ENCODE measurements at regions of chr18 and their contacts with region 1.

Region 1: DNA sequence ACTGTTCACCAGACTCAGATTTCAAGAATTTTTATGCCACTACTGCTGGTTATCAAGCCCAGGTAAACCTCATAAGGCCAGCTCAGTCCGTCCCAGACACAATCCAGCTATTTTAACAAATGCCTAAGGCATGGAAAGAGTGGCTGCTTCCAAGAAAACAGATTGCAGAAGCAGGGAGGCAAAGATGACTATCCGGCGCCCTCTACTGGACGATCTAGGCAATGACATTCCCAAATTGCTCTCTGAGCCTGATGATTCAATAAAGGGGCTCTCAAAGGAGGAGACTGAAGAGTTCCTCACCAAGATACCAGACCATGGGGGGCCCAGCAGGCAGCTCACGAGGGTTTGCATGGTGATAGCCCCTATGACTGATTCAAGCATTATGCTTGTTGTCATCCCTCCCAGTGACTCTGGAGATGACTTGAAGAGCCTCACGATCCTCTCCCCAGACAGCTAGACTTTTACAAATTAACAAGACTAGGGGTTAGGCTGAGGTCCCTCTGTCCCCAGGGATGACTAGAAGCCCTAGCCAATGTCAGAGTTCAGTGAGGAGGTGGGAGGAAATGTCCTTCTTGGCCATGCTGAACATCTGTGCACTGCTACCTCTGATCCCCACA is 25.0 kb downstream of the SERPINB8 start:
- DNase-seq: peak; percentile 34
- H3K4me3 ChIP-seq: no peak overlapping the region
- H3K27ac ChIP-seq: no peak overlapping the region
- H3K27me3 ChIP-seq: no peaks in the 10 kb centered on the region
- CTCF ChIP-seq: peak; percentile 94

Region 2: DNA sequence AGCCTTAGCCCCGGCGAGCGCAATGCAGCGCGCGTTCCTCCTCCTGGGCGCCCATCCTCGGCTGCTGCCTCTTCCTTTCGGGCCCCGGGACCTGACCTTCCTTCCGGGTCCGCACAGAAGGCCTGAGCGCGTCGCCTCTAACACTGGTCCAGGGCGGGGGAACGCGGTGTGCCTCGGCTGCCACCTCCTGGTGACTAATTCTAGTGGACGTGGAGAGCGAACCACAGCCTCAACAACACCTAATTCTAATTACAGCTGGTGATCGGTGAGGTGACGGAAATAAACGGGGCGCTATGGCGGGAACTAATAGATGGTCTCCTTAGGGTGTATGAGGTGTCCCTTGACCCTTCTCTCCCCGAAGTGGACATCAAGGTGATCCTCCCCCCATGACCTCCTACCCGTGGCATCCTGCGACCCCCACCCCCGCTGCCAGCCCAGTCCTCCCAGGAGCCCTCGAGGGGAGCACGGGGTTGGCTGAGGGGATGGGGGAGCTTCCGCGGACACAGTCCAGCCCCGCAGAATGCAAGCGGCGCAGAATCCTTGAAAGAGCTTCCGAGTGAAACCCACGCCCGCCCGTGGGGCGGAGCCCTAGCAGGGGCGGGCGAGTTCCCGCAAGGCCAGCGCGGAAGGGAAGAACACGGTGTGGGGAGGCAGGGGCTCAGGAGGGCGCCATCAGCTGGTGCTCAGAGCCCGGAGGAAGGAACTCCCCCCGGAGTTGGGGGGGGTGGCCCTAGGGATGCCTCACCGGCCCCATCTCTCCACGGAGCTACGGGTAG is 58.5 kb before region 1 on chr18:
- CTCF ChIA-PET with region 1: interaction called, 18 read pairs
- POLR2A ChIA-PET with region 1: interaction called, 7 read pairs
- DNase-seq: no peak
- H3K4me3 ChIP-seq: peak overlapping the region; percentile 68
- H3K27ac ChIP-seq: no peak overlapping the region
- H3K27me3 ChIP-seq: peaks cover 12% of the 10 kb centered on the region
- CTCF ChIP-seq: peak; percentile 70

Region 3: DNA sequence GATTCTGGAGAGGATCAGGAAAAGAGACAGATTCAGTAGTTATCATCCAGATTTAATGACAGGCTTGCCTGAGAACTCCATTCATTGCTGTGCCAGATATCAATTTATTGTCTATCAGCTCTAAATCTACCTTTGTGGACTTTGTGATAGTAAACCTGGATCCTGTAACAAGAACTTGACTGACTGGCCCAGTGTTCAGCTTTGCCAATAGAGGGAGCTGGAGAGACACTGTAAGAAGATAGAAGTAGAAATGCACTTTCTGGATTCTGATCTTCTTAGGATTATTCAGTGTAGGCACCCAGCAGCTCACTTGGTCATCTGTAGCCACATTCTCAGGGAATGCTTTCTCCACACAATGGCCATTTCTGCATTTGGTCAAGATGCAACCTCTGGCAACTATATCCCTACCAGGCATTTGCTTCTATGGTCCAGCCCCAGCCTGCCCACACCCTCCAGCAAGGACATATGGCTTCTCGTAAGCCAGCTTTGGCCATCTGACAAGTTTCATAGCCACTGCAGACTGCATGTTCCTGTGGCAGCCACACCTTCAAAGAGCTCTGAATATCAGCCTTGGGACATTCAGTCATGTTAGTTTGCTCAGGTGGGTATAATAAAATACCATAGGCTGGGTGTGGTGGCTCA is 31.2 kb before region 1 on chr18:
- CTCF ChIA-PET with region 1: interaction called, 128 read pairs
- POLR2A ChIA-PET with region 1: no interaction called
- DNase-seq: peak; percentile 45
- H3K4me3 ChIP-seq: no peak overlapping the region
- H3K27ac ChIP-seq: no peak overlapping the region
- H3K27me3 ChIP-seq: peaks cover 5% of the 10 kb centered on the region
- CTCF ChIP-seq: peak; percentile 98

Region 4: GRCh38 chr18:63969960-63970802 is 24.7 kb before region 1 on chr18 and contains the start of gene SERPINB8:
- CTCF ChIA-PET with region 1: interaction called, 128 read pairs
- POLR2A ChIA-PET with region 1: interaction called, 3 read pairs
- DNase-seq: peak; percentile 85
- H3K4me3 ChIP-seq: peak within 1 kb of the TSS; percentile 87
- H3K27ac ChIP-seq: peak within 1 kb of the TSS; percentile 99
- H3K27me3 ChIP-seq: no peaks in the 10 kb centered on the region
- CTCF ChIP-seq: no peak
- polyA plus RNA-seq, gene SERPINB8: 14.7 and 17.9 TPM in 2 replicates

Region 5: DNA sequence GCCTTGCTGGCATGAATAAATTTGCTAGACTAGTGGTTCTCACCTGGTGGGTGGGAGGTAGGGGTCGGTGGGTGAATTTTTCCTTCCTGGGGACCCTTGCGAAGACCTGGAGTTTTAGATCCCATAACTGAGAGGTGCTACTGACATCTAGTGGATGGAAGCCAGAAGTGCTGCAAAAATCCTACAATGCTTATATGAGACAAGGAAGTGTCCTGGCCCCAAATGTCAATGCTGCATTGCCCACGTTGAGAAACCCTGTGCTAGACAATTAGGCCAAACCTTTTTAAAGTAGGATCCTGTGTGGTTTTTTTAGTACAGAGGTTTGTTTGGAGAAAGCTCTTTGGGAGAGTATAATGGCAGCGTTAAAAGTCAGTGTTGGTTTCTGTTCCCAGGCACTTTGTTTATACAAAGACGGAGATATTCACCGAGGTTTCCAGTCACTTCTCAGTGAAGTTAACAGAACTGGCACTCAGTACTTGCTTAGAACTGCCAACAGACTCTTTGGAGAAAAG is 15.4 kb before region 1 on chr18:
- CTCF ChIA-PET with region 1: interaction called, 35 read pairs
- POLR2A ChIA-PET with region 1: no interaction called
- DNase-seq: peak; percentile 21
- H3K4me3 ChIP-seq: peak overlapping the region; percentile 48
- H3K27ac ChIP-seq: no peak overlapping the region
- H3K27me3 ChIP-seq: no peaks in the 10 kb centered on the region
- CTCF ChIP-seq: peak; percentile 78

Region 6: GRCh38 chr18:64009305-64009704 is 14.4 kb after region 1 on chr18:
- CTCF ChIA-PET with region 1: interaction called, 18 read pairs
- POLR2A ChIA-PET with region 1: no interaction called
- DNase-seq: no peak
- H3K4me3 ChIP-seq: no peak overlapping the region
- H3K27ac ChIP-seq: no peak overlapping the region
- H3K27me3 ChIP-seq: no peaks in the 10 kb centered on the region
- CTCF ChIP-seq: no peak

Region 7: GRCh38 chr18:64017870-64018269 is 23.0 kb after region 1 on chr18:
- CTCF ChIA-PET with region 1: interaction called, 15 read pairs
- POLR2A ChIA-PET with region 1: no interaction called
- DNase-seq: no peak
- H3K4me3 ChIP-seq: no peak overlapping the region
- H3K27ac ChIP-seq: no peak overlapping the region
- H3K27me3 ChIP-seq: no peaks in the 10 kb centered on the region
- CTCF ChIP-seq: peak; percentile 59